ENCODE measurements at regions of chr20 and their contacts with region 1.

Region 1: DNA sequence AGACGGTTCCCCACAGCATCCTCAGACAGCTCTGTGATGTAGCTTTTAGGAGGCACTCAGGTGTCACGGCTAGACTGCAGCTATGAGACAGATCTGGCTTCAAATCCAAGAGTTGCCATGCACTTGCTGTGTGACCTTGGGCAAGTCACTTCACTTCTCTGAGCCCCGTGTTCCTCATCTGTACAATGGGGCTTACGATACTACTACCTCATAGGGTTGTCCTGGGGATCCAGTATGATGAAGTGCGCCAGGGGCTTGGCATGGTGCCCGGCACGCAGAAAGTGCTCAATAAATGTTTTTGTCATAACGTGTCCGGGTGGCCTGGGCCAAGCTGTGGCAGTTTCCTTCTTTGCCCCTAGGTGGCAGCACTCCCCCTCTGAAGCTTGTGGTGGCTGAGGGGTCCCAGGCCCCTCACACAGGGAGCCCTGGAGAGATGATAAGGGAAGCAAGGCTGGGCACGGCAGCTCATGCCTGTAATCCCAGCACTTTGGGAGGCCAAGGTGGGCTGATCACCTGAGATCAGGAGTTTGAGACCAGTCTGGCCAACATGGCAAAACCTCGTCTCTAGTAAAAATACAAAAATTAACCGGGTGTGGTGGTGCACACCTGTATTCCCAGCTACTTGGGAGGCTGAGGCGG is 19.1 kb upstream of the CHMP4B start:
- DNase-seq: peak; percentile 87
- H3K4me3 ChIP-seq: peak overlapping the region in 1 of 2 experiments; percentile 39; a peak in 1 of 4 replicates
- H3K27ac ChIP-seq: no peak overlapping the region
- H3K4me1 ChIP-seq: peaks cover 7 to 30% of the 10 kb centered on the region in 2 experiments; a peak in 2 of 4 replicates
- H3K27me3 ChIP-seq: no peaks in the 10 kb centered on the region
- CTCF ChIP-seq: peak; percentile 90
- EP300 ChIP-seq: no peak
- RAD21 ChIP-seq: peak; percentile 76

Region 2: DNA sequence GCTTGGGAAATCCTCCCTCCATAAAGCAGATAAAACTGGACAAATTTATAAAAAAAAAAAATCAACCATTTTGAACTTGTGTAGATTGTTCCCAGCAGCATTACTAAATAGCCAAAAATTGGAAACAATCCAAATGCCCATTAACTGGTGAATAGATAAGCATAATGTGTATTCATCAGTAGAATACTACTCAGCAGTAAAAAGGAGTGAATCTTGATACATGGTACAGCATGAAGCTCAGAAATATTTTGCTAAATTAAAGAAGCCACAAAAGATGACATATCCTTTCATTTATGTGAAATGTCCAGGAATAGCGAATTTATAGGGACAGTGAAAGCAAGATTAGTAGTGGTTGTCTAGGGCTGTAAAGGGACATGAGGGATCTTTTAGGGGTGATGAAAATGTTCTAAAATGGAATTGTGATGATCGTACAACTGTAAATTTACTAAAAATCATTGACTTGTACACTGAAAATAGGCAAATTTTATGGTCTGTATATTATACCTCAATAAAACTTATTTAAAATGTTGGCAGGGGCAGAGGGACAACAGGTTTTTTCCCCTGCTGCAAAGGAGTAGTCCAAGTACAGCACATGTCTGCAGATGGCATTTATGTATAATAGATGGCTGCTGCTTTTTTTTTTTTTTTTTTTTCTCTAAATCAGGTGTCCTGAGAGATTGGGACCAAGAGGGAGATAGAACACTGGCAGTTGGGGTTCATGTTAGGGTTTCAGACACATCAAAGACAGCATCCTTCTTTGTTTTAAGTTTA is 242.7 kb before region 1 on chr20:
- CTCF ChIA-PET with region 1: no interaction called
- POLR2A ChIA-PET with region 1: no interaction called
- DNase-seq: no peak
- H3K4me3 ChIP-seq: no peak overlapping the region
- H3K27ac ChIP-seq: no peak overlapping the region
- H3K4me1 ChIP-seq: peaks cover 0 to 10% of the 10 kb centered on the region in 2 experiments
- H3K27me3 ChIP-seq: no peaks in the 10 kb centered on the region
- CTCF ChIP-seq: no peak
- EP300 ChIP-seq: no peak
- RAD21 ChIP-seq: no peak

Region 3: DNA sequence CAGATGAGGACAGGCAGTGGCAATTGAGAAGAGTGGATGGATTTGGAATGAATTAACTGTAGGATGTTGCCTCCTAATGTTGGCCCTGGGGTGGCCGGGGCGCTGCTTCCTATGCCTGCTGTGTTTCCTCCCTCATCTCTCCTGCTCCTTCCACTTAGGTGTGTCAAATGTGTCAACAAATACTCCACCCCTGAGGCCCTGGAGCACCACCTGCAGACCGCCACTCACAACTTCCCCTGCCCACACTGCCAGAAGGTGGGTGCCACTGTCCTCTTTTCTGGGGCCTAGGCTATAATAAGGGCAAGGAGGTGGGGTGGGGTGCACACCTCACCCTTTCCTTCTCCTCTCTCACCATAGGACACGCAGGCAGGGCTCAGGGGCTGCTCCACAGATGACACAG is 10.9 kb before region 1 on chr20:
- CTCF ChIA-PET with region 1: interaction called, 16 read pairs
- POLR2A ChIA-PET with region 1: no interaction called
- DNase-seq: no peak
- H3K4me3 ChIP-seq: no peak overlapping the region
- H3K27ac ChIP-seq: no peak overlapping the region
- H3K4me1 ChIP-seq: peaks cover 0 to 4% of the 10 kb centered on the region in 2 experiments; a peak in 1 of 4 replicates
- H3K27me3 ChIP-seq: no peaks in the 10 kb centered on the region
- CTCF ChIP-seq: no peak
- EP300 ChIP-seq: no peak
- RAD21 ChIP-seq: no peak

Region 4: DNA sequence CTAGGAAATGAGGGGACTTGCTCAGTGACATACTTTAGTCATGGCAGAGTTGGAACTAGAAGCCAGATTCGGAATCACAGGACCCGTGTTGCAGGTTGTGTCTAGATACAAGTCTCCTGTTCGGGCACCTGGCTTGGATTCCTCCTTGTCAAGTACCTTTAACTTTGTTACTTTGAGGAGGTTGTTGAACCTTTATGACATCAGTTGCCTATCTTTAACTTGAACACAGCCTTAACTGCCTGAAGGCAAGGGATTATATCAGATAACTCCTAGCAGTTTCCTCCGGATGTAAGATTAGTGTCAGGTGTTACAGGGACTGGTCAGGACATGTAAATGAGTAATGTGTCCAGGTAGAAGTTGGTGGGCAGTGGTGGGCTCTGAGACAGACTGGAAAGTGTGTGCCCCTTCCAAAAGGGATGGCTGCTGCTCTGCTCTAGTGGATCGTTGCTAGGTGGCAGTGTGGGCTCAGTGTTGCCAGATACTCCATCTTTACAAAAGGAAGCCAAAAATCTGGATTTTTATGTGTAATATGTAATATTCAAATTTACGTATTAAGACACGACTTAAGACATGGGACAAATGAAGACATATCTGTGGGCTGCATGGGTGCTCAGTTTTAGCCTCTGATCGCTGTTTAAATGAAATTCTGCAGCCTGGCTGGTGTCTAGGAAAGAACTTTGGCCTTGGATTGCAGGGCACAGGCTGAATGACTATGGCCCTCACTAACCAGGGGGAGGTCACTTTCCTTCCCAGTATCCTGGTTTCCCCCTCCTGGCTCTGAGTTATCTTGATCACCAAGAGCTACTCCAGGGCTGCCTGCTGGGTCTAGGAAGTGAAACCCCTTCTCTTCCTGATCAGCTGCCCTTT is 46.2 kb after region 1 on chr20:
- CTCF ChIA-PET with region 1: interaction called, 10 read pairs
- POLR2A ChIA-PET with region 1: no interaction called
- DNase-seq: no peak
- H3K4me3 ChIP-seq: no peak overlapping the region
- H3K27ac ChIP-seq: peak overlapping the region in 1 of 2 experiments; percentile 93; a peak in 2 of 4 replicates
- H3K4me1 ChIP-seq: peaks cover 13 to 64% of the 10 kb centered on the region in 2 experiments
- H3K27me3 ChIP-seq: no peaks in the 10 kb centered on the region
- CTCF ChIP-seq: peak; percentile 24; the same call in 1 of the 2 replicates
- EP300 ChIP-seq: no peak
- RAD21 ChIP-seq: peak; percentile 66